ENCODE measurements at regions of chr6 and their contacts with region 1.

Region 1: DNA sequence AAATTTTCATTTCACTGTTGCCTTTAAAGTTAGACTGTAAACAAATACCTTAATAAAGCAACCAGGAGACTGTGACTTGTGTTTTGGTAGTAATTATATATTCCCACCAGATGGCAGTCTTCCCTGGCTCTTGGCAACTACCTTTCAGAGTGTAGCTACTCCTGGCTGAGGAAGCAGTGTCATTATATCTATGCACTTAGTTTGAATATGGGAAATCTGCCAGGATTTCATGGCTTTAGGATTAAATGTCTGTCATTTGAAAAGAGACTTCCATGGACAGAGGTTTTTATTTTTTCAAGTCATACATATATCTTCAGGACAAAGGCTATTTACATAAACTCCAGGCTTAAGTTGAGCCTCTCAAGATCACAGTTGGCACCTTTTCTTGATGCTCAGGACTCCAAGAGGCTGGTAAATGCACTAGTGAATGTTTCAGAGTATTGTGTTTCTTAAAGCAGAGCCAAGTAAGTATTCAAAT is 160.1 kb downstream of the C6orf58 start:
- DNase-seq: peak; percentile 63
- ATAC-seq: peak; percentile 99
- H3K4me3 ChIP-seq: no peak overlapping the region
- H3K27ac ChIP-seq: no peak overlapping the region
- H3K4me1 ChIP-seq: no peaks in the 10 kb centered on the region
- H3K27me3 ChIP-seq: peaks cover 0 to 13% of the 10 kb centered on the region in 2 experiments; a peak in 1 of 5 replicates
- CTCF ChIP-seq: peak; percentile 82
- EP300 ChIP-seq: no peak
- POLR2A ChIP-seq: no peak
- RAD21 ChIP-seq: peak; percentile 82

Region 2: GRCh38 chr6:128005009-128005408 is 268.0 kb after region 1 on chr6:
- CTCF ChIA-PET with region 1: no interaction called
- POLR2A ChIA-PET with region 1: no interaction called
- in situ Hi-C with region 1: no loop called
- intact Hi-C with region 1: loop called (anchors 1 kb)
- DNase-seq: no peak
- ATAC-seq: no peak
- H3K4me3 ChIP-seq: no peak overlapping the region
- H3K27ac ChIP-seq: no peak overlapping the region
- H3K4me1 ChIP-seq: peaks cover 21% of the 10 kb centered on the region
- H3K27me3 ChIP-seq: no peaks in the 10 kb centered on the region
- CTCF ChIP-seq: no peak
- EP300 ChIP-seq: no peak
- POLR2A ChIP-seq: no peak
- RAD21 ChIP-seq: no peak

Region 3: DNA sequence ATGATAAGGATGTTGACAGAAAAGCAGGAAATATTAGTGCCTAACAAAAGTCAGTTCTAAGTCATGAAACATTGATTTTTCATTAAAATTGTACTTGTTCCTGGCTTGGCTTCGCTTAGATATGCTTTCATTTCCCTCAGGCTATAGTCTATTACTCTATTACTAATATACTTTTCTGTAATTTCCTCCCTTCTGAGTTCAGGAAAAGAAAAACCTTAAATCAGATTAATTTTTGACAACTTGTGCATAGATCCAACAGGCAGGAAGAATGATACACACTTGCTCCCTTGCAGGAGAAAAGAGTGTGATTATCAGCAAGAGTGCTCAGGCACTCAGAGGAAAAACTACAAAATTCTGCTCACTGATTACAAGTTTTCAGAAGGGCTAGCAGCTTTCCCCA is 309.0 kb after region 1 on chr6:
- CTCF ChIA-PET with region 1: no interaction called
- POLR2A ChIA-PET with region 1: no interaction called
- in situ Hi-C with region 1: no loop called
- intact Hi-C with region 1: no loop called
- DNase-seq: no peak
- ATAC-seq: no peak
- H3K4me3 ChIP-seq: no peak overlapping the region
- H3K27ac ChIP-seq: no peak overlapping the region
- H3K4me1 ChIP-seq: no peaks in the 10 kb centered on the region
- H3K27me3 ChIP-seq: no peaks in the 10 kb centered on the region
- CTCF ChIP-seq: no peak
- EP300 ChIP-seq: no peak
- POLR2A ChIP-seq: no peak
- RAD21 ChIP-seq: no peak

Region 4: DNA sequence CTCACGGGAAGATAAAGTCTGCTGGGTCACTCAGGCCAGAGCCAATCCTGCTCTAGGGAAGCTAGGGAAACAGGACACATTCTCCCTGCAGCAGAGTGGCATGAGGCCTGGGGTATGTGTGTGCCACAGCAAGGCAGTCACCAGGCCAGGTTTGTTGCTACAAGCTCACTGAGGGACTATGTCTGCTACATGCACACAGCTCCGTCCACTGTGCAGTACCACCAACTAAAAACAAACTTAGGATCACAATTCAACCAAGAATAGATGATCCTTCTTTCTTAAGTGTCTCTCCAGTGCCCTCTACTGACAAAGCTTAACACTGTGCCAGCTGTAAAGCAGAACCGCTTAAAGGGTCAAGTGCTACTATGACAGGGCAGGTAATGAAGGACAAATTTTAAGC is 590.8 kb after region 1 on chr6:
- CTCF ChIA-PET with region 1: no interaction called
- POLR2A ChIA-PET with region 1: no interaction called
- in situ Hi-C with region 1: no loop called
- intact Hi-C with region 1: loop called (anchors 5 kb)
- DNase-seq: peak; percentile 37
- ATAC-seq: peak; percentile 89
- H3K4me3 ChIP-seq: no peak overlapping the region
- H3K27ac ChIP-seq: no peak overlapping the region
- H3K4me1 ChIP-seq: no peaks in the 10 kb centered on the region
- H3K27me3 ChIP-seq: no peaks in the 10 kb centered on the region
- CTCF ChIP-seq: peak; percentile 79
- EP300 ChIP-seq: no peak
- POLR2A ChIP-seq: no peak
- RAD21 ChIP-seq: peak; percentile 47

Region 5: DNA sequence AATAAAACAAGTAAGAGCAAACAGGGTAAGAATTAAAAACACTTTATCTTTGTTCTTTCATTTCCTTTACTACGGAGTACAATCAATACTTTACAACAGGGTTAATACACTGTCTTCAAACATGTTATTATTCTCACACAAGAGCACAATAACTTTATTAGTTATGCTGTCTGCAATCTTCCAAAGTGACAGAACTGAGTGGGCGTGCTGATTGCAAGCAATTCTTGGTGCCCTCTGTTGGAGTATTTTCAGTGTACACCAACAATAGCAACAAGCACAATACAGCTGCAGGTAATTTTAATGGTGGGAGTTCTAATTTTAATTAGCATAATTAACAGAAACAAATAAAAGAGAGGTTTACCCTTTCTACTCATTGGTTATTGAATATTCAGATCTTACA is 817.3 kb after region 1 on chr6:
- CTCF ChIA-PET with region 1: no interaction called
- POLR2A ChIA-PET with region 1: no interaction called
- in situ Hi-C with region 1: no loop called
- intact Hi-C with region 1: loop called (anchors 1 kb)
- DNase-seq: peak; percentile 13
- ATAC-seq: peak; percentile 54; the same call in 2 of the 3 replicates
- H3K4me3 ChIP-seq: no peak overlapping the region
- H3K27ac ChIP-seq: no peak overlapping the region
- H3K4me1 ChIP-seq: no peaks in the 10 kb centered on the region
- H3K27me3 ChIP-seq: peaks cover 0 to 9% of the 10 kb centered on the region in 2 experiments; a peak in 2 of 5 replicates
- CTCF ChIP-seq: peak; percentile 39; the same call in 1 of the 2 replicates
- EP300 ChIP-seq: no peak
- POLR2A ChIP-seq: no peak
- RAD21 ChIP-seq: no peak

Region 6: DNA sequence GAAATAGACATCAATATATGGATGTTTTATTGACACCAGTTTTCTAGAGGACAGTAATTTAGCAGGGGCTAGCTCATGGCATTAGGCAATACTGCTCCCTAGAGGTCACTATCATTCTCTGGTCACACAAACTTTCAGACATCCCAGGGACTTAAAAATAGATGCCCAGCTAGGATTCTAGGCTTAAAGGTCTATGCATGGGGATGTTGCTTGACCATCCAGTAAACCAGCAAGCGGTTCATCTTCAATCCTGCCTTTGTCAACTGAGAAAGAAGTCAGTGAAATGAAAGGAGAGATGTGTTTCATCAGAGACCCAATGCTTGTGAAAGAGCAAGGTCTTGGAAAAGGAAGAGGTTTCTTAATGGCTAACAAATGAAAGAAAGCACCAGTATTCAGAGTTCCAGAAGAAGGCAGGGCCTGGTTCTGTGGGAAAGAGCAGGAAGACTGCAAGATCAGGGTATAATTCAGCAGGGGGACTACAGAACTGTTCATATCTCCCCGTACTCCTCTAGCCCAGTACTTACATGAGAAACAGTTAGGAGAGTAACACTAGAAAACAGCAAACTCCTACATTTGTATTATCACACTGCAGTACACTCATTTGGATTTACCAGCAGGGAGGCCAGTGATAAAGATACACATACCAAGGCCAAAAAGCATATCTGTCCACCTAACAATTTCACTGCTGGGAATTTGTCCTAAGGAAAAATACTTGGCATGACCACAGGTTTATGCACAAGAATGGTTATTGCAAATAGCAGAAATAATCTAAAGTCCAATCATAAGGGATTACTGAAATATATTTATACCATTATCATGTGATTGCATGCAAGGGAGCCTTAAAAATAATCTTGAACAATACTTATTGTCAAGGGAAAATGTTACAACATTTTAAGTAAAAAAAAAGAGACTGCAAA is 994.5 kb after region 1 on chr6:
- CTCF ChIA-PET with region 1: interaction called, 42 read pairs
- POLR2A ChIA-PET with region 1: no interaction called
- in situ Hi-C with region 1: loop called (anchors 5 kb)
- intact Hi-C with region 1: loop called (anchors 1 kb)
- DNase-seq: peak; percentile 56
- ATAC-seq: peak; percentile 90
- H3K4me3 ChIP-seq: no peak overlapping the region
- H3K27ac ChIP-seq: no peak overlapping the region
- H3K4me1 ChIP-seq: no peaks in the 10 kb centered on the region
- H3K27me3 ChIP-seq: no peaks in the 10 kb centered on the region
- CTCF ChIP-seq: peak; percentile 79
- EP300 ChIP-seq: no peak
- POLR2A ChIP-seq: no peak
- RAD21 ChIP-seq: peak; percentile 63

Region 7: DNA sequence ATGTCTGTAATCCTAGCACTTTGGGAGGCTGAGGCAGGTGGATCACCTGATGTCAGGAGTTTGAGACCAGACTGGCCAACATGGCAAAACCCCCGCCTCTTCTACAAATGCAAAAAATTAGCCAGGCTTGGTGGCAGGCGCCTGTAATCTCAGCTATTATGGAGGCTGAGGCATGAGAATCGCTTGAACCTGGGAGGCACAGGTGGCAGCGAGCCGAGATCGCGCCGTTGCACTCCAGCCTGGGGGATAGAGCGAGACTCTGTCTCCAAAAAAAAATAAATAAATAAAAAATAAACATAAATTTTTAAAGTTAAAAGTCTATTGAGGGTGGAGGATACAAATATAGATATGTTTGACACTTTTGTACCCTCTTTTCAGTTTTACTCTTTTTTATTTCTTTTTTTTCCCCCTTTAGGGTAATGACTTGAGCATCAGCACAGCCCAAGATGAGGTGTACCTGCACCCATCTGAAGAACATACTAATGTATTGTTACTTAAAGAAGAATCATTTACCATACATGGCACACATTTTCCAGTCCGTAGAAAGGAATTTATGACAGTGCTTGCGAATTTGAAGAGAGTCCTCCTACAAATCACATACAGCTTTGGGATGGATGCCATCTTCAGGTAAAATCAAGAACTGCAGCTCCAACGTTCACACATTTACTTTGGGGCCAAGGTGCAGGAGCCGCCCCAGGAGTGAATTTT is 1514.8 kb after region 1 on chr6:
- CTCF ChIA-PET with region 1: no interaction called
- POLR2A ChIA-PET with region 1: no interaction called
- in situ Hi-C with region 1: no loop called
- intact Hi-C with region 1: loop called (anchors 1 kb)
- DNase-seq: peak; percentile 63
- ATAC-seq: peak; percentile 93
- H3K4me3 ChIP-seq: no peak overlapping the region
- H3K27ac ChIP-seq: no peak overlapping the region
- H3K4me1 ChIP-seq: no peaks in the 10 kb centered on the region
- H3K27me3 ChIP-seq: no peaks in the 10 kb centered on the region
- CTCF ChIP-seq: peak; percentile 85
- EP300 ChIP-seq: no peak
- POLR2A ChIP-seq: no peak
- RAD21 ChIP-seq: peak; percentile 69; the same call in 1 of the 2 replicates

Region 8: DNA sequence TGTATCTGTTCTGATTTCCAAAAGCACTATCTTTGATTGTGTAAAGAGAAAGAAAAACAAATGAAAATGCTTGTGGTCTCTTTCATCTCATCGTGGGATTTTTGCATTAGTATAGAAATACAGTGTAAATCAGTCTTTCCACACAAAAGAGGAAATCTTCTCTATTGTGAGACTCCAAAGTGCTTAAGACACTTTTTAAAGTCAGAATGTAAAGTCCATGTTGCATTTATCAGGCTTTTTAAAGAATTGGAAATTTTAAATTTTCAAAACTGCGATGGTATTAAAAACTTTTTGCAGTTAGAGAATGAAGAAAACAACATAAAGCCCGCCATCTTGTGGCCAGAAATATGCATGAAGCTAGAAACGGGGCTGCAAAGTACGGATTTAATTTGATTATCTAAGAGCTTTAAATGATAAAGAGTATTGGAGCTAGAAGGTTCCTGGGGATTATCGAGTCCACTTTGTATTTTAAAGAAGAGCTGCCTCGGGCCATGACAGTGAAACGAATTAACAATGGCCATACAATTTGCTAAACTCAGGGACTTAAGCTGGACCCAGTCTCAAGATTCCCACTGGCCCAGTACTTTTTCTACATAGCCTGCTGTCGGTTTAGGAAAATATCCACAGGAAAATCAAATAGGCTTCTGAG is 1633.3 kb after region 1 on chr6:
- CTCF ChIA-PET with region 1: interaction called, 3 read pairs
- POLR2A ChIA-PET with region 1: no interaction called
- in situ Hi-C with region 1: no loop called
- intact Hi-C with region 1: loop called (anchors 2 kb)
- DNase-seq: peak; percentile 32
- ATAC-seq: peak; percentile 58; the same call in 2 of the 3 replicates
- H3K4me3 ChIP-seq: no peak overlapping the region
- H3K27ac ChIP-seq: no peak overlapping the region
- H3K4me1 ChIP-seq: no peaks in the 10 kb centered on the region
- H3K27me3 ChIP-seq: no peaks in the 10 kb centered on the region
- CTCF ChIP-seq: peak; percentile 63
- EP300 ChIP-seq: no peak
- POLR2A ChIP-seq: no peak
- RAD21 ChIP-seq: no peak

Measured in HepG2 (cell line).